ENCODE measurements at regions of chr16 and their contacts with region 1.

Region 1: DNA sequence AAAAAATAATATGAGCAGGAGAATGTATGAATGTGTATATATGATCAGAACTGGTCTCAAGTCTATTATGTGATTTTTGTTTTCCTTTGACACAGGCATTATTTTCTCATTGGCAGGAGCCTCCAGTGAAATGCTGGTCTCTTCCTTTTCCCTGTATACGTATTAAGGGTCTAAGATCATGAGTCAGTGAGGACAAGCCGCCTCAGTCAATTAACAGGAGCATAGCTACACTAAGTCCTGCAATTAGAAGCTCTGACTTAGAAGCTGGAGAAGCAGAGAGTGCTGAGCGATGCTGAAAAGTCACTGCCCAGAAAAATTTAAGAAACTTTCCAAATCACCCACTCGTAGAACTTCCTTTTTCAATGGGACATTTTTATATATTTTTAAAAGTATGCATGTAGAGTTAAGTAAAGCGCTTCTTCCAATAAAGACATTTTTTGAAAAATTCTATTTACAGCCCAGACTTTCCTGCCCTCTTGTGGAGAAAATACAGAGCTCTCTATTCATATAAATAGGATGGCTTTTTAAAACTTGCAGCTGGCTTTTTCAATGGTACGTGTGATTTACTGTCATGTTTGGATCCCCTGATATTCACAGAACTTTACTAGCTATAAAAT is 70.2 kb upstream of the PSMD7 start:
- DNase-seq: no peak
- H3K4me3 ChIP-seq: no peak overlapping the region
- H3K27ac ChIP-seq: no peak overlapping the region
- H3K27me3 ChIP-seq: no peaks in the 10 kb centered on the region
- CTCF ChIP-seq: peak; percentile 63

Region 2: GRCh38 chr16:74034862-74035261 is 191.6 kb before region 1 on chr16:
- CTCF ChIA-PET with region 1: interaction called, 12 read pairs
- POLR2A ChIA-PET with region 1: no interaction called
- DNase-seq: no peak
- H3K4me3 ChIP-seq: no peak overlapping the region
- H3K27ac ChIP-seq: no peak overlapping the region
- H3K27me3 ChIP-seq: no peaks in the 10 kb centered on the region
- CTCF ChIP-seq: peak; percentile 36

Region 3: DNA sequence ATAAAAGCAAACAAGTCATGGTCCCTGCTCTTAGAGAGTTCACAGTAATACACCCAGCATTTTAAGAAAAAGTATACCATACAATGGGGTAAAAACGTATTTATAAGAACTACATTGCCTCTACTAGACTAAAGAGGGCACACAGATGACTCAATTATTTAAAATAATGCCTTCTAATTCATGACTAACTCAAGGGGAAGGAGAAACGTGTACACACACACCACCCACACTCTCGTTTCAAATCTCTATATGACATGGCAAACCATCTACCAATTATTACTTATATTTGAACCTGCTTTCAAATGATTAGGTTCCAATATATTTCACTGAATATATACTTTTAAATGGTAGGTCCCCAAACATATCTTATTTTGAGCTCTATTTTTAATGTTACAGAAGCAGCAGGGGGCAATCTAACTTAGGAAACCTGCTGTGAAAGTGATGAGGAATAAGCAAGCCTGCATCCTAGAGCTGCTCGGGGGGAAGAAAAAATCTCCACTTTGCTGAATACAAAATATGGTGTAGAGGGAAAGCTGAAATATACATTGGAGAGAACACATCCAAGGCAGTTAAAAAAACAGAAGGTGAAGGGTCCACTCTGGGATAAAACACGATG is 162.2 kb before region 1 on chr16:
- CTCF ChIA-PET with region 1: interaction called, 95 read pairs
- POLR2A ChIA-PET with region 1: no interaction called
- DNase-seq: no peak
- H3K4me3 ChIP-seq: no peak overlapping the region
- H3K27ac ChIP-seq: no peak overlapping the region
- H3K27me3 ChIP-seq: no peaks in the 10 kb centered on the region
- CTCF ChIP-seq: peak; percentile 34

Region 4: DNA sequence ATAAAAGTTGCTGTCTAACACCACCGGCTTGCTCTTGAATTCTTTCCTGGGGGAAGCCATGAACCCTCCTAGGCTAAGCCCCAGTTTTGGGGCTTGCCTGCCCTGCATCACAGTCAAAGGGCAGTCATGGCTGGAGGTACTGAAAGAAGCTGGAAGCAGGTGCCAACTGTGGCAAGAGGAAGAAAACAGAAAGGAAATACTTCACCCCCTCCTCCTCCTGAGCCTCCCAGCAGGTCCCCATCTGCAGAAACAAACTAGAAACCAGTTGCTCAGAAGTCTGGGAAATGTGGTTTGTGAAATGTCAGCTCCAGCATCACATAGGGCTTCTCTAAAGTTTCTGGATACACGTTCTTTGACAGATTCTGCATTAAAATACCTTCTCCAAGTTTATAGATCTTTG is 79.8 kb before region 1 on chr16:
- CTCF ChIA-PET with region 1: no interaction called
- POLR2A ChIA-PET with region 1: no interaction called
- DNase-seq: no peak
- H3K4me3 ChIP-seq: no peak overlapping the region
- H3K27ac ChIP-seq: no peak overlapping the region
- H3K27me3 ChIP-seq: no peaks in the 10 kb centered on the region
- CTCF ChIP-seq: no peak

Region 5: DNA sequence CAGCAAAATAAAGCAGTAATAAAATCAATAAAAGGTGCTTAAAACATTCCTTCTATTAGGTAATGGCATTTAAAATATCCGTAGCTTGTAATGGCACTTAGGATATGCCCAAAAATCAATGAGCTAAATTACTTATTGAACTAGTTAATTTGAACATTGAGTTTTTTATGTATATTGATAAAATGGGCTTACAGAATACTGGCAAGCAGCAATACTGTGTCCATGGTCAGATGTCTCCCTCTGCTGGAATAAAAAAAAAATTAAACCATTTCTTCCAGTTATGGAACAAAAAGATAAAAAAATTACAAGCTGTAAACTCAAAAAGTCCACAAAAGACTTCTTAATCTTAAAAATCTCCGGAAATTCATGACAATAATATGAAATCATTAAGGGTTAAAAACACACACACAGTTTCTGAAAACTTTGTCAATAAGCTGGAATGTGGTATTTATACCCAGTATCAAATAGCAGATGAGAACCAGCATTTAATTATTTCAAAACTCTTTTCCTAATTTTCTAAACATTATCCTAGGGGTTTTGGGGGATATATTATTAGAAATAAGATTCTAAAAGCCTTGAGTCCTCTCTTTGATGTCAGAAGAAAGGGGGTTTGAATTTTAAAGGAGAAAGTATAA is 48.7 kb after region 1 on chr16:
- CTCF ChIA-PET with region 1: interaction called, 13 read pairs
- POLR2A ChIA-PET with region 1: no interaction called
- DNase-seq: no peak
- H3K4me3 ChIP-seq: no peak overlapping the region
- H3K27ac ChIP-seq: no peak overlapping the region
- H3K27me3 ChIP-seq: no peaks in the 10 kb centered on the region
- CTCF ChIP-seq: peak; percentile 63